Mucosa of descending colon (tissue), 3 donors: ENCODE measurements at regions of chr1 and their contacts with region 1.

Region 1: DNA sequence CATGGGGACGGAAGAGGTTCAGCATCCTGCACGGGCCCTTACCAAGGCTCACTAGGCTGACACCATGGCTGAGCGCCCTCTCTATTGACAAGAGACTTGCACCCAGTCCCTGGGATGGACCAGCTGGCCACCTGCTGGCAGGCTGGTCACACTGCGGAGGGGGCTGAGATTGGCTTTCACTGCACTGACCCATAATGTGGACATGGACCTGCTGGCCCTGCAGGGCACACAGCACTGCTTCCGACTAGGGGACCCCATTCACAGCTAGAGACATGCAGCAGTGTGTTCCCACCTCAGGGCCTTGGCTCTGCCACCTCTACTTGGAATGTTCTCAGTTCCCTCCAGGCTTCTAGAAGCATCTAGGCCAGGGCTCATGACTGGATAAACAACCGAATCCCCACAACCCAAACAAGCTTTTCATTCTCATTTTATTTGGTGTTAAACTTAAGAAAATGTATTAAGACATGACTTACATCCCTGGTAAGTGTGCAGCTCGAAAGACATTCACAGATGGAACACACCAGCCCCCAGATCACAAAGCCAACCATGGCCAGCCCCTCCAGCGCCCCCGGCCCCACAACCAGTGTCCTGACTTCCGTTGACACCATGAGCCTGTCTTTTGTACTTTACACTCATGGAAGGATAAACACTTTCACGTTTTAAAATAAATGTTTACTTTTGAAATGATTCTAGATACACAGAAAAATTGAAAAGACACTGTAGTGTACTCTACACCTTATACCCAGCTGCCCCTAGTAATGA is 9.3 kb upstream of the SRARP start:
- DNase-seq: peak in 2 of 3 donors; percentile 65 to 73
- ATAC-seq: peak; percentile 84
- H3K4me3 ChIP-seq: no peak overlapping the region
- H3K4me1 ChIP-seq: peaks cover 2% of the 10 kb centered on the region
- CTCF ChIP-seq: peak; percentile 53

Region 2: GRCh38 chr1:15803354-15803753 is 191.4 kb before region 1 on chr1:
- intact Hi-C with region 1: loop called in 1 of 2 experiments (anchors 10 kb)
- DNase-seq: no peak
- ATAC-seq: no peak
- H3K4me3 ChIP-seq: no peak overlapping the region
- H3K4me1 ChIP-seq: peaks cover 22% of the 10 kb centered on the region
- CTCF ChIP-seq: no peak